ENCODE measurements at regions of chr19 and their contacts with region 1.

Region 1: DNA sequence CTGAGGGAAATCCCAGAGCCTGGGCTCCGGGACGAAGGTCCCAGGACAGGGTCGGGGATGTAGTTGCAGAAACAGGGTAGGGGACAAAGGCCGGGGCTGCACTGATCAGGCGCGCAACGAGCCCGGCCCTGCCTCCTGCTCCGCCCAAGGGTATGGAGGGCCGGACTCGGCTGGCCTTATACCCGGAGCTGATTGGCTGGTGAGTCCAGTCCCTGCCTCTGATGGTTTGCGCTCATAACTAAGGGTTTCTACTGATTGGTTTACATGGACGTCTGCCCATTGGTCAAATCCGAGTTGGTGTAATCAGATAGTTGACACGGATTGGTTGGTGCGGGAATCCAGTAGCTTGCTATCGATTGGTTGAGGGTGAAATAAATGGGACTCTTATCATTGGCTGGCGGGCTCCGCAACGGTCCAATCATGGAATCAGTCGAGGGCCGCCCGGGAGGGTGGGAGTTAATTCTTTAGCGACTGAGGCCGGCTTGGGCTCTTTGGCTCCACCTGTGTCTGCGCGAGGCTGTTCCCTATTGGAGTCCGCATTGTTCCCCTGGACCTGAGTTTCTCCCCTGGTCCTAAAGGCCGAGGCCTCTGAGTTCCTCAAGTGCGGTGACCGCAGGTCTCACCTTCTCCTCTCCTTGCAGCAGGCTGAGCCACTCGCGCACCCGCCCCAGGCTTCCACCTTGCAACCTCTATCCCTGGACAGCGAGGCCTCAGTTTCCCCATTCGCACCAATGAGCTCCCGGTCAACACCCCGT is 570 bp upstream of the MPND start:
- DNase-seq: peak; percentile 92

Region 2: DNA sequence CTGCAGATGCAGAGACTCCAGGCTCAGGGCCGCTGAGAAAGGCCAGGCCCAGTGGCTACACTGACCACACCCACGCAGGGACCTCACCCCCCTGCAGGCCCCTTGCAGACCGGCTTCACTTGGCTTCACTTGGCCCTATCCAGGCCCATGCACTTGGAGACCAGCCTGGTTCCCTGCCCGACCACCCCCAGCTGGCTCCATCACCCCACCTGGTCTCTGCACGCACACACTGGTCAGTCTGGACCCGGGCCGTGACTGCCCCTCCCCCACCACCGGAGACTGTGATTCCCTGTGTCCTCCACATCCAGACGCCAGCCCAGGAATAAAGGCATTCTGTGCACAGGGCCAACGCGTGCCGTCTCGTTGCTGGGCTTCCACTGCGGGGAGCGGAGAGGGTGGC is 118.3 kb before region 1 on chr19:
- CTCF ChIA-PET with region 1: no interaction called
- POLR2A ChIA-PET with region 1: no interaction called
- DNase-seq: peak; percentile 3

Region 3: DNA sequence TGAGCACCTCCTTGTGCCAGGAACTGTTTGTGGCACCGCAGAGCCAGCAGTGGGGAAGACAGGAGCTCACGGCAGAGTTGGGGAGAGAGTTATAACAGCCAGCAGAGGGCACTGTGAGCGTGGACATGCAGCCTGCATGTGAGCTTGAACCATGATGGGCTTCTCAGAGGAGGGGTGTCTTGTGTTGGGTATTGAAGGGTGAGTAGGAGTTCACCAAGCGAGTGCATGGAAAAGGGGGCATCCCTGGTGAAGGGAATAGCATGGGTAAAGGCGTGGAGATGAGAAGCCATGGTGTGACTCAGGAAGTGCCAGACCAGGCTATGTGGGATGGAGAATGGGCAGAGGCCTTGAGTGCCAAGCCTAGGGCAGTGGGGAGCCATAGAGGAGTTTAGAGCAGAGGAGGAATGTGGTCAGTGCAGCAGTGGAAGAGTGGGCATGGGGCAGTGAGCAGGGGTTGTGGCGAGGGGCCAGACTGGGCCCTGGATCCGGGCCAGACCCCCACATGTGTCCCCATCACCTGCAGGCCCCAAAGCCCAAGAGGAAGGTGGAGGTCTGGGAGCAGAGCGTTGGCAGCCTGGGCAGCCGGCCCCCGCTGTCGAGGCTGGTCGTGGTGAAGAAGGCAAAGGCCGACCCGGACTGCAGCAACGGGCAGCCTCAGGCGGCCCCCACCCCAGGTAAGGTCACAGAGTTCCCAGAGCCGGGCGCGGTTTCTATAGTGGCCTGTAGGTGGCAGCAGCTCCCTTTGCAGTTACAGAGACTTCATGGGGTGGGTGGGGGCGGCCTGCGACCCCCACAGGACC is 75.5 kb before region 1 on chr19:
- CTCF ChIA-PET with region 1: interaction called, 18 read pairs
- POLR2A ChIA-PET with region 1: interaction called, 23 read pairs
- DNase-seq: peak; percentile 80

Region 4: GRCh38 chr19:4284176-4284958 is 58.4 kb before region 1 on chr19:
- CTCF ChIA-PET with region 1: no interaction called
- POLR2A ChIA-PET with region 1: interaction called, 14 read pairs
- DNase-seq: peak; percentile 94

Region 5: GRCh38 chr19:4322942-4323665 is 19.7 kb before region 1 on chr19:
- CTCF ChIA-PET with region 1: no interaction called
- POLR2A ChIA-PET with region 1: interaction called, 34 read pairs
- DNase-seq: no peak

Region 6: GRCh38 chr19:4360641-4361151 is 17.9 kb after region 1 on chr19:
- CTCF ChIA-PET with region 1: interaction called, 3 read pairs
- POLR2A ChIA-PET with region 1: interaction called, 17 read pairs
- DNase-seq: no peak

Region 7: DNA sequence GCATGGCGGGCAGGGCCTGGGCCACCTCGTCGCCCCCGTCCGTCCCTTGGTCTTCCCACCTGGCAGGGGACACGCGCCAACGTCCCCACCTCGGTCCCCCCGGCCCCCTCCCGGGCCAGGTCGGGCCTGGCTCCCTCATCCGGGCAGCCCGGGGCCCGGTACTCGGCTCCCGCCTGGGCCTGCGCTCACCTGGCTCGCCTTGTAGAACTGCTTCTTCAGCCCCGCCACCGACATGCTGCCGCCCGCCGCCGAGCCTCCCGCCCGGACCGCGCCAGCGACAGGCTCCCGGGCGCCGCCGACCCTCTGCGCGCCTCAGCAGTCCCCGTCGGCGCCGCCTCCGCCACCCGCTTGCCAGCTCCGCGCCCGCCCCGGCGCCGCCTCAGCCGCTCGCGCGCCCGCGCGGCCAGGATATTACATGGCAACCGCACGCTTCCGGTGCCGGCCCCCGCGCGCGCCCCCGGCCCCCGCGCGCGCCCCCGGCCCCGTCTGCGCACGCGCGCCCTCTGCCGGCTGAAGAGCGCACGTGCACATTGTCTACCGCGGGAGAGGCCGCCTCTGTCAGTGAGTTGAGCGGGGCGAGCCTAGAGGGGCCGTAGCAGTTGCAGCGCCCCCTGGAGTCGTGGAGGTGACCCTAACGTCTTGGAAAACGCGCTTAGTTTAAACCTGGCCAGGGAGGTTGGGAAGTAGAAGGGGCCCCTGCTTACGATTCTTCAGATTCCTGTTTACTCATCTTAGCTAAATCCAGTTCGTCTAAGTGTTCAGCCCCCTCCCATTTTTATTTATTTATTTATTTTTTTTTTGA is 57.5 kb after region 1 on chr19 and contains the start of gene SH3GL1:
- CTCF ChIA-PET with region 1: no interaction called
- POLR2A ChIA-PET with region 1: interaction called, 12 read pairs
- DNase-seq: peak; percentile 89

Measured in HEK293T (cell line).